Transverse colon (tissue), 4 donors: ENCODE measurements at regions of chr5 and their contacts with region 1.

Region 1: GRCh38 chr5:158660726-158661125 is 439.0 kb downstream of the EBF1 start:
- DNase-seq: no peak
- H3K4me3 ChIP-seq: no peak overlapping the region
- H3K27ac ChIP-seq: no peak overlapping the region
- H3K4me1 ChIP-seq: no peaks in the 10 kb centered on the region
- H3K27me3 ChIP-seq: no peaks in the 10 kb centered on the region
- CTCF ChIP-seq: no peak
- EP300 ChIP-seq: no peak
- POLR2A ChIP-seq: no peak

Region 2: GRCh38 chr5:159316519-159317383 is 656.0 kb after region 1 on chr5:
- in situ Hi-C with region 1: no loop called
- intact Hi-C with region 1: loop called (anchors 5 kb)
- DNase-seq: peak; percentile 41
- H3K4me3 ChIP-seq: no peak overlapping the region
- H3K27ac ChIP-seq: no peak overlapping the region
- H3K4me1 ChIP-seq: no peaks in the 10 kb centered on the region
- H3K27me3 ChIP-seq: peaks cover 6% of the 10 kb centered on the region
- CTCF ChIP-seq: peak; percentile 33 to 55 (median 50)
- EP300 ChIP-seq: no peak
- POLR2A ChIP-seq: no peak